Sigmoid colon (tissue), 7 donors: ENCODE measurements at regions of chr2 and their contacts with region 1.

Region 1: DNA sequence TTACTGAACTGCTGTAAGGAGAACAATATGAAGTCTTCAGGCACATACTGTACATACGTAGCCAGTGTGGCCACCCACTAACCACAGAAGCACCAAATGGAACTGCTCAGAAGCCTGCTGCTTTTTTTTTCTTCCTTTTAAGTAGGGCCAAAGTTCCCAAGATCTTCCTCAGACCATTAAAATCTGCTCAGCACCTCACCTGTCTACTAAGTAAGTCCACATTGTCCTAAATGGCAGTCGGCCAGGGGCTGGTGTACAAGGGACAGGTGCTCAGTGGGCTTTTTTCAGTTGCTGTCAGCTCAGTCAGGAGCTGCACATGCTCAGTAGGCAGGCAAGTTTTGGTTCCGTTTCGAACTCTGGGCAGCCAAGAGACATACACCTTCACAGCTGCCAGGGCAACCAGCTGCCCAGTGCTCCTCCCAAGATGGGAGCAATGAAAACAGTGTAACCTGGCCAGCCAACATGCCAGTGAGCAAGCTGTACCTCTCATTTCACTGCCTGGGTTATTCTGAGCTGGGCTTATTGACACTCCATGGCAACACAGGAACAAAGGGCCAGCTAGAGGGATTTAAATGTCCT is 86.1 kb downstream of the ACVR1 start:
- DNase-seq: peak; percentile 68
- H3K4me3 ChIP-seq: no peak overlapping the region
- H3K27ac ChIP-seq: peak overlapping the region; percentile 48 to 62 (median 52)
- H3K4me1 ChIP-seq: peaks cover 0 to 75% (median 67%) of the 10 kb centered on the region in 4 donors
- H3K27me3 ChIP-seq: no peaks in the 10 kb centered on the region
- CTCF ChIP-seq: no peak
- EP300 ChIP-seq: no peak
- POLR2A ChIP-seq: no peak

Region 2: DNA sequence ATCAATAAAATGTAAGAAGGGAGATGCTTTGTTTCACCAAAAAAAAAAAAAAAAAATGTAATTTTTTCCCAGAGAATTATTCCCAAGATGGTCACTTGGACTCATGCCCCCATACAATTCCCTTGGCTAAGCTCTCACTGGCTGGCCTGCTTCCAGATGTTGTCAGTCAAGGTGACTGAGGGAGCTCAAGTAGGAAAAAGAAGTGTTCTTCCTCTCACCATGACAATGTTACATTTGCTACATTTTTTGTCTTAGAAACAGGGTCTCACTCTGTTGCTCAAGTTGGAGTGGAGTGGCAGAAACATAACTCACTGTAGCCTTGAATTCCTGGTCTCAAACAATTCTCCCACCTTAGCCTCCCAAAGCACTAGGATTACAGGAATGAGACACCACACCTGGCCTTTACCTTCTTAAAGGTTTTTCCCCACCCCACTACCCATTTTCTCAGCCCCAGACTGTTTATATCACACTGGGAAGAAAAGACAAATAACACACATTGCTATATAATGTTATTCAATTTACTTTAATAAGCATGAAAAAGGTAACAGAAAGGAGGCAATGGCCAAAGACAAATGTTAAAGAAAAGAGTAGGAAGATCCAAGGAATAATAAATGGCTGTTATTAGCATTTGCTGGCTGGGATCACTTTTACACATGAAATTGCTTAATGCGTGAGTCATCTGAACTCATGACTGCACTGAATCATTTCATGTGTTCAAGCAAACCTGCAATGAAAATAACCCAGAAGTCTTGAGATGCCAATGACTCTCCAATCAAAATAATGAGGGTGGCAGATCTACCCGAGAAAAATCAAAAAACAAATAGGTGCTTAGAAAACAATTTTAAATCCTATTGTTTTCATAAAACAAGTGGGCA is 40.9 kb after region 1 on chr2:
- intact Hi-C with region 1: loop called (anchors 5 kb)
- DNase-seq: no peak
- H3K4me3 ChIP-seq: no peak overlapping the region
- H3K27ac ChIP-seq: peak overlapping the region; percentile 33 to 79 (median 70)
- H3K4me1 ChIP-seq: peaks cover 0 to 27% (median 24%) of the 10 kb centered on the region in 4 donors
- H3K27me3 ChIP-seq: no peaks in the 10 kb centered on the region
- CTCF ChIP-seq: no peak
- EP300 ChIP-seq: peak in 3 of 4 donors; percentile 60 to 81 (median 74)
- POLR2A ChIP-seq: no peak